Activated T-helper 2 cell treated with anti-CD3 and anti-CD28 coated beads, Interferon-gamma antibody, Interleukin-2, Interleukin-4, amounts not matched to agents 10 μg/mL and 5 μg/mL and 100 μg/mL, durations not matched to agents 14 hours and 24 hours and 36 hours (primary cell): ENCODE measurements at regions of chr12 and their contacts with region 1.

Region 1: DNA sequence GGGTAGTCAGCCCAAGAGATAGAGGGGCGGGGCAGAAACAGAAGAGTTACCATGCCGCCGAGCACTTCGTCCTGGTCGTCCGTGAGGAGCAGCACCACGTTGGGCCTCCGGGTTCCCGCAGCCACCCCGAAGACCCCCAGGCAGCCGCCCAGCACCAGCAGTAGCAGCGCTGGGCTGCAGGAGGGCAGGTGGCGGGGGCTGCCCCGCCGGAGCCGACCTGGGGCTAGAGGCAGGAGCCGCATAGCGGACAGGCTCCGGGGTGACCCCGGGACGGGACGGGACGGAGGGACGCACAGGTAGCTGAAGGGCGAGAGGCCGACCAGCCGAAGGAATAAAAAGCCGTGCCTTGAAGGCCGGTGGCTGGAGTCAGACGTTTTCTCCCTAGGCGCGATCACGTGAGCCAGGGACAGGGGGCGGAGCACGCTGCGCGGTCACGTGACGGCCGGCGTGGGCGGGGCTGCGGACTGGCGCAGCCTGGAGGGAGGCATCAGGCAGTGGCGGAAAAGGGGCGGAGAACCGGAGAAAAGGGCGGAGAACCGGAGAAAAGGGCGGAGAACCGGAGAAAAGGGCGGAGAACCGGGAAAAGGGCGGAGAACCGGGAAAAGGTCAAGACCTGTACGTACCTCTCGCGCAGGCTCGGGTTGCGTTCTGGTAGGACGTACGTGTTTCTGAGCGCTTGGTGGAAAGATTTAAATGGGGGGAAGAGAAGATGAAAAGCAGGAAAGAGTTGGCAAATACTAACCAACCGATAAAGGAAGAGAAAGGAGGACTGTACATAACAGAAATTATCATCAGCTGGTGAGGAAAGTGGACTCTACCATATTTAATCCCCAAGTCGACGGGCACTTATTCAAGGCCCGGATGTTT is at the start of gene GNS:
- DNase-seq: peak; percentile 94
- H3K4me3 Mint-ChIP-seq: peak within 1 kb of the TSS; percentile 94
- H3K27ac Mint-ChIP-seq: peak within 1 kb of the TSS; percentile 93
- H3K4me1 Mint-ChIP-seq: peaks cover 33% of the 10 kb centered on the region
- H3K27me3 Mint-ChIP-seq: peaks cover 7% of the 10 kb centered on the region
- total RNA-seq, gene GNS: 33.9 and 38.2 TPM in 2 replicates

Region 2: DNA sequence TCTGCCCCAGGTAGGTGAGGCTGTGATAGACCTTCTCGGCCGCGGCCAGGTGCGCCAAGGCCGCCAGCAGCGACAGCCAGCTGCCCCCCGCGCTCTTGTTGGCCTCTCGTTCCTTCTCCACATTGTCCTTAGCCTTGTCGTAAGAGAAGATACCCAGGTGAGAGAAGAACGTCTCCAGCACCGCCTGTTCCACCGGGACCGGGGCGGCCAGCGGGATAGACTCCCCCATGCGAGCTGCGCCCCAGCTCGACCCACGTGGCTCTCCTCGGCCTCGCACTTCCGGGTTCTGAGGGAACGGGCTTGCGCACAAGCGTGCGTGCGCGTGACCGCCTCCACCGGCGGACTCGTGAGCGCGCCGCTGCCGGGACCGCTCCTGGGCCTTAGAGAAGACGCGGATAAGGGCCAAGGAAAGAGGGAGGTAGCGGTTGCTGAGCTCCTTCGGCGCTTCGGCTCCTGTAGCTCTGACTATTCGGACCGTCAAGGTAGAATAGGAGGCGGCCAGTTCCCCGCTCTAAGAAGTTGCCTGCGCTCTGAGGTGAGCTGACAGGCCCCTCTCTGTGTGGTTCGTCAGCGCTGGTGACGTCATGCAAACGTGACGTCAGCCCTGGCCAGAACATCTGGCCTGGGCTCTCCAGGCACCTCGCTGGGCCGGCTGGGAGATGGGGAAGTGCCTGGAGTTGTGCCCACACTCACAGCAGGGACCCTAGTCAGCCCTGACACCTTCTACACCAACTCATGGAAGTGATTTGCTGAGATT is 537.1 kb before region 1 on chr12 and contains the start of gene KICS2:
- intact Hi-C with region 1: loop called (anchors 5 kb)
- DNase-seq: peak; percentile 88
- H3K4me3 Mint-ChIP-seq: peak within 1 kb of the TSS; percentile 99
- H3K27ac Mint-ChIP-seq: peak within 1 kb of the TSS; percentile 100
- H3K4me1 Mint-ChIP-seq: peaks cover 39% of the 10 kb centered on the region
- H3K27me3 Mint-ChIP-seq: peaks cover 18% of the 10 kb centered on the region
- total RNA-seq, gene KICS2: 15.3 and 16.6 TPM in 2 replicates

Region 3: GRCh38 chr12:64352181-64352580 is 407.1 kb before region 1 on chr12:
- intact Hi-C with region 1: no loop called
- DNase-seq: no peak
- H3K4me3 Mint-ChIP-seq: no peak overlapping the region
- H3K27ac Mint-ChIP-seq: no peak overlapping the region
- H3K4me1 Mint-ChIP-seq: no peaks in the 10 kb centered on the region
- H3K27me3 Mint-ChIP-seq: peaks cover 2% of the 10 kb centered on the region

Region 4: GRCh38 chr12:64459394-64459891 is 299.8 kb before region 1 on chr12:
- intact Hi-C with region 1: loop called (anchors 1 kb)
- DNase-seq: no peak
- H3K4me3 Mint-ChIP-seq: peak overlapping the region; percentile 76
- H3K27ac Mint-ChIP-seq: peak overlapping the region; percentile 77
- H3K4me1 Mint-ChIP-seq: peaks cover 43% of the 10 kb centered on the region
- H3K27me3 Mint-ChIP-seq: no peaks in the 10 kb centered on the region

Region 5: GRCh38 chr12:64625243-64626077 is 133.8 kb before region 1 on chr12:
- intact Hi-C with region 1: loop called (anchors 5 kb)
- DNase-seq: no peak
- H3K4me3 Mint-ChIP-seq: peak overlapping the region; percentile 73
- H3K27ac Mint-ChIP-seq: peak overlapping the region; percentile 83
- H3K4me1 Mint-ChIP-seq: peaks cover 25% of the 10 kb centered on the region
- H3K27me3 Mint-ChIP-seq: no peaks in the 10 kb centered on the region

Region 6: DNA sequence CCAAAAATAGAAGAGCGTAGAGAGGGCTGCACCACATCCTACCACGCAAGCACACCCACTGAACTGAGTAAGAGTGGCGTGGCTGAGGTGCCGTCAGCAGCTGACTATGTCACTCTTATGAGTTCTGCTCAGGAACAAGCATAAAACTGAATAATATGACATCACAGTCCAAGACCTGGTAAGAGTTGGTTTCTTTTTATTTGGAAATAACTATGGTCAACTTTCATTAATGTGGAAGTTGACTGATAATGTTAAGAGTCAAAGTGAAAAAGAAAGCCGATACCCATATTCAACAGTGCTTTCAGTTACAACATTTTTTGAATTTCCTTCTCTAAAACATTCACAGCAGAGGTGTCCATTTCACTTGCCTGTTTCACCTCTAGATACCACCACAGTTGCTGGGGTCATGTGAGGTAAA is 44.7 kb before region 1 on chr12:
- intact Hi-C with region 1: loop called (anchors 5 kb)
- DNase-seq: peak; percentile 15
- H3K4me3 Mint-ChIP-seq: no peak overlapping the region
- H3K27ac Mint-ChIP-seq: peak overlapping the region; percentile 42
- H3K4me1 Mint-ChIP-seq: peaks cover 28% of the 10 kb centered on the region
- H3K27me3 Mint-ChIP-seq: no peaks in the 10 kb centered on the region

Region 7: GRCh38 chr12:64780531-64781279 is 21.4 kb after region 1 on chr12:
- intact Hi-C with region 1: no loop called
- DNase-seq: no peak
- H3K4me3 Mint-ChIP-seq: peak overlapping the region; percentile 69
- H3K27ac Mint-ChIP-seq: no peak overlapping the region
- H3K4me1 Mint-ChIP-seq: peaks cover 13% of the 10 kb centered on the region
- H3K27me3 Mint-ChIP-seq: peaks cover 76% of the 10 kb centered on the region

Region 8: GRCh38 chr12:64877363-64878004 is 118.2 kb after region 1 on chr12:
- intact Hi-C with region 1: loop called (anchors 5 kb)
- DNase-seq: no peak
- H3K4me3 Mint-ChIP-seq: no peak overlapping the region
- H3K27ac Mint-ChIP-seq: peak overlapping the region; percentile 51
- H3K4me1 Mint-ChIP-seq: peaks cover 21% of the 10 kb centered on the region
- H3K27me3 Mint-ChIP-seq: no peaks in the 10 kb centered on the region

Region 9: GRCh38 chr12:65086236-65086635 is 327.0 kb after region 1 on chr12:
- intact Hi-C with region 1: no loop called
- DNase-seq: no peak
- H3K4me3 Mint-ChIP-seq: no peak overlapping the region
- H3K27ac Mint-ChIP-seq: no peak overlapping the region
- H3K4me1 Mint-ChIP-seq: no peaks in the 10 kb centered on the region
- H3K27me3 Mint-ChIP-seq: peaks cover 26% of the 10 kb centered on the region